OCI-LY7 (cell line): ENCODE measurements at regions of chr7 and their contacts with region 1.

Region 1: GRCh38 chr7:55593515-55594318 is 21.4 kb upstream of the VOPP1 start:
- DNase-seq: peak; percentile 76
- H3K4me3 ChIP-seq: no peak overlapping the region
- H3K27ac ChIP-seq: no peak overlapping the region
- H3K4me1 ChIP-seq: no peaks in the 10 kb centered on the region
- CTCF ChIP-seq: peak; percentile 92

Region 2: DNA sequence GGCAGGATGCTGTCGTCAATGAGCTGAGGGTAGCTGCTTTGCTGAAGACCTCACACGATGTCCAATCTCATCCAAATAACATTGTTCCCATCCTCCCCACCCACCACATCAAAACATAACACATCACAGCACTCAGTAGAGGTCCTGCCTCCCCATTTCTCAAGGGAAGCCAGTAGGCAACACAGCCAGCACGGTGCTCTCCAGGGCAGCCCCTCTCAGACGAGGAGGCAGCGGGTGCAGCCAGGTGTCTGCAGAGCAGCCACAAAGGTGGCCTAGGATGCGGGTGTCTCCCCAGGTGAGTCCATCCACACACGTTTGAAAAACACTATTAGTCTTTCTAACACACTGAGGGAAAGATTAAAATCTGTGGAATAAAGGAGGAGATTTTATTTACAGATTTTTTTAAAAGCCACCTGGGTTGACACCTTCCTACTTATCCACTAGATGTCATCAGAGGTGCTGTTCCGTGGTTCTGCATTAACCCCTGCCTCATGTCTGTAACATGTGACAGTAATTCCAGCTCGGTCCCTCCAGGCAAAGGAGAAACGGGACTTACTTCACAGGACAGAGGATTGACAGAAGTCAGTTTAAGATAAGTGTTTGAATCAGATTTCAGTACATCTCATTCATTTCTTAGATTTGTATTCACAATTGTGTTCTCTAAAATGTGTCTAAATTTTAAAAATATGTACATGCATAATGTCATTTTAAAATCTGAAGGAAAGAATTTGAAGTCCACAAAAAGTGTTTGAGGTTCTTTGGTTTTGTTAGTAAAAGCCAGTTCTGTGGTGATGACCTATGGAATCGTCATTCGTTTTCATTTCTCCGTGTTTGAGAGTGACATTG is 160.6 kb before region 1 on chr7:
- CTCF ChIA-PET with region 1: no interaction called
- POLR2A ChIA-PET with region 1: no interaction called
- intact Hi-C with region 1: loop called (anchors 1 kb)
- DNase-seq: peak; percentile 72
- H3K4me3 ChIP-seq: no peak overlapping the region
- H3K27ac ChIP-seq: no peak overlapping the region
- H3K4me1 ChIP-seq: no peaks in the 10 kb centered on the region
- CTCF ChIP-seq: peak; percentile 91